ENCODE measurements at regions of chr10 and their contacts with region 1.

Region 1: GRCh38 chr10:99435986-99436638 is 5.7 kb upstream of the GOT1 start:
- DNase-seq: peak; percentile 65
- H3K4me3 Mint-ChIP-seq: no peak overlapping the region
- H3K27ac Mint-ChIP-seq: no peak overlapping the region
- H3K4me1 Mint-ChIP-seq: peaks cover 6% of the 10 kb centered on the region
- H3K27me3 Mint-ChIP-seq: no peaks in the 10 kb centered on the region
- CTCF ChIP-seq: peak; percentile 27

Region 2: DNA sequence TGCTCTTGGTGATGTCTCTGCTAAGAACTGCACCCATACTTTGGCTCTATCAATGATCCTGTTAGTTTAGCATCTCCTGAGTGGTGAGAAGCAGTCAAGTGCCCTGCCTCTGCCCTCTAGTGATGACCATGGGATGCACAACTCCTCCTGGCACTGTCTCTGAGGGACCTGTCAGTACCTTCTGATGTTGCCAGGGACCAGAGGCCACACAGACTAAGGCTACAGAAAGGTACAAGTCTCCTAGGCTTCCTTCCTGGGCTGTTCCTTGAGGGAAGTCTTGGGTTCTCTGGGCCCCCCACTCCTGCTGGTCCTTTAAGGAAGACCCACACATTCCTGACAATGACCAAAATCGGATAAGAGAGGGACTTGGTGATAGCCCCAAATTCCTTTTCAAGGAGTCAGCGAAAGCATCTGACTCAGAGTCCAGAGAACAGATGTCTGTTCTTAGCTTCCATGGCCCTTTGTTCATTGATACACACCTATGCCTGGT is 112.0 kb after region 1 on chr10:
- CTCF ChIA-PET with region 1: interaction called, 20 read pairs
- POLR2A ChIA-PET with region 1: interaction called, 4 read pairs
- intact Hi-C with region 1: loop called (anchors 1 kb)
- DNase-seq: peak; percentile 43
- H3K4me3 Mint-ChIP-seq: no peak overlapping the region
- H3K27ac Mint-ChIP-seq: no peak overlapping the region
- H3K4me1 Mint-ChIP-seq: peaks cover 8% of the 10 kb centered on the region
- H3K27me3 Mint-ChIP-seq: peaks cover 60% of the 10 kb centered on the region
- CTCF ChIP-seq: no peak

Region 3: DNA sequence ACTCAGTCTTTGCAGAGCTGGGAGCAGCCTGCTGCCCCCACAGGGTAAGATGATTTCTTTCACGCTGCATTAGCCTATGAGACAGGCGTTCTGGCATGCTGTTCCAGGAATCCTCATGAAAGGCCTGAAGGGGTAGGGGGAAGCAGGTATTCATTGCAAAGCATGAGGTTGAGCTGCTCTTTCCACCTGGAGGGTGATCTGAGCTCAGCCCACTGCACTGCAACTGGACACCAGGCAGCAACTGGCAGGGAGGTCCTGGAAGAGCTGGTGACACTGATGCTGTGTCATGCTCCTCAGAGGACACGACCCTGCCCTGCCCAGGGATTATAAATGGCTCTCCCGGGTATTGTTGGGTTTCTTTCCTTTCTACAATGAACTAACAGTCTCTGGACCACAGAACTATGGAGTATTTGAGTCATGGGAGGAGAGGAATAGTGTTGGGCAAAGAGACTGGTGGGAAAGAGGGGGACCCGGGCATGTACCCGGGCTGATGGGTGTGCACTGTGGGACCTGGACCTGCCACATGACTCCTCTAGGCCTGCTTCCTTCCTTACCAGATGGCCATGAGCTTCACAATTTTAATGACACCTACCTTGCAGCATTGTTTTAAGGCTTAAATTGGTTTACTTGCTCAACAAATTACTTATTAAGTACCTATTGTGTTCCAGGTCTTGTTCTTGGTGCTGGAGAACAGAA is 159.8 kb after region 1 on chr10:
- CTCF ChIA-PET with region 1: interaction called, 22 read pairs
- POLR2A ChIA-PET with region 1: no interaction called
- intact Hi-C with region 1: no loop called
- DNase-seq: no peak
- H3K4me3 Mint-ChIP-seq: no peak overlapping the region
- H3K27ac Mint-ChIP-seq: no peak overlapping the region
- H3K4me1 Mint-ChIP-seq: no peaks in the 10 kb centered on the region
- H3K27me3 Mint-ChIP-seq: no peaks in the 10 kb centered on the region
- CTCF ChIP-seq: no peak

Region 4: GRCh38 chr10:99620713-99621453 is 184.8 kb after region 1 on chr10:
- CTCF ChIA-PET with region 1: interaction called, 338 read pairs
- POLR2A ChIA-PET with region 1: interaction called, 283 read pairs
- intact Hi-C with region 1: no loop called
- DNase-seq: peak; percentile 95
- H3K4me3 Mint-ChIP-seq: peak overlapping the region; percentile 78
- H3K27ac Mint-ChIP-seq: peak overlapping the region; percentile 98
- H3K4me1 Mint-ChIP-seq: peaks cover 32% of the 10 kb centered on the region
- H3K27me3 Mint-ChIP-seq: no peaks in the 10 kb centered on the region
- CTCF ChIP-seq: no peak